GM10248 (cell line): ENCODE measurements at regions of chr5 and their contacts with region 1.

Region 1: DNA sequence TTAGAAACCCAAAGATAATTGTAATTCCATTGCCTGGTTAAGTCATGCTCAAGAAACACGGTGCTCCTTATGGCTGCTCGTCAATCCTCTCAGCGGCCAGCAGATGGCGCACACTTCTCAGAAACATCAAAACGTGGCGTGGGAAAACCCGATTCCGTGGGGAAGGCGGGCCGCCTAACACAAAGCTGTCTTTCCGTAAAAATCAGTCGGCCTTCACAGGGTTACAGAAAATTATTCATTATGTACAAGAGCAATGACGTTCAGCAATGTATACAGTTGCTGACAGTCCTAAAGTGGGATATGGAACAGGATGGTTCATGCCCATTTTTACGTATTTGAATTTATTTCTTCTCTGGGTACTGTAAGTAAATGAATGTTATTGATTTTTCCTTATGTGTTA is 83.5 kb downstream of the PDE4D start:
- DNase-seq: peak; percentile 64
- CTCF ChIP-seq: peak; percentile 89

Region 2: GRCh38 chr5:59790399-59791125 is 19.5 kb before region 1 on chr5:
- CTCF ChIA-PET with region 1: interaction called, 11 read pairs
- POLR2A ChIA-PET with region 1: no interaction called
- DNase-seq: peak; percentile 23
- CTCF ChIP-seq: no peak

Region 3: GRCh38 chr5:59828623-59829022 is 18.6 kb after region 1 on chr5:
- CTCF ChIA-PET with region 1: interaction called, 34 read pairs
- POLR2A ChIA-PET with region 1: no interaction called
- DNase-seq: no peak
- CTCF ChIP-seq: no peak

Region 4: DNA sequence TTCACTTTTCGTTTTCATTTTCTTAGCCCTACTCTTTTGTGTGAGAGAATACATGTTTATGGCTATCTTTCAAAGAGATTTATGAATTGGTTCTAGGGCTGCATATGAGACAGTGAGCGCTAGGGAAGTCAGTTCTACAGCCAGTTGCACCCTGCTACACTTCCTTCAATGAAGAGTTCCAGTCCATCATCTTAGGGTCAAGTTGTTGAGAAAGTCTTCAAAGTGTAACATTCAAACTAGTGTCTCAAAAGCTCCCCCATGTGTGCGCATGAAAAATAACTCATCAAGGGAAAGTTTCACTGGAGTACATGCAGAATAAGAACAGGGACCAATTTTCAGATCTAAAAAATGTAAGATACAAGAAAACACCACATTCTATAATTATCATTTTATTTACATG is 572.7 kb after region 1 on chr5:
- CTCF ChIA-PET with region 1: interaction called, 12 read pairs
- POLR2A ChIA-PET with region 1: no interaction called
- DNase-seq: peak; percentile 29
- CTCF ChIP-seq: peak; percentile 27

Region 5: DNA sequence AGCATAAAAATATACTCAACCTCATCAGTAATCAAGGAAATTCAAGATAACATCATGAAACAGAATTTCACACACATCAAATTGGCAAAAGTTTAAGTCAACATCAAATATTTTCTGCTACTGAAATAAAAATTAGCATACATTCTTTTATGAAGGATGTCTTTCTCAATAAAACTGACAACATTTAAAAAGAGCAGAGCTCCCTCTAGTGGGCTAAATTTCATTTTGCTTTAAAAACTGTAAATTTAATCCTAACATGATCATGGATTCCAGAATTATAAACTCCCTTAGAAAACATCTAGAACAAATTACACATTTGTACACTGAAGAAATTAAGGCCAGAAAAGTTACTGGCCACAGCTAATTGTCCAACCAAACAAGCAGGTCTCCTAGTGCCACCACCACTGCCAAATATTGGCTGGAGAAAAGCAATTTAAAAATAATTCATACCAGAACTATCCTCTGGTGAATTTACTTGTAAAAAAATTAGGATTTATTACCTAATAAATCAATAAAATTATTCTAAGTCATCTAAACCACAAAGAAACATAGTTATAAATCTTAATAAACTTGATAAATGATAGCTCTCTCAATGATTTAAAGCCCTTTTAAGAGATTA is 858.8 kb after region 1 on chr5:
- CTCF ChIA-PET with region 1: interaction called, 57 read pairs
- POLR2A ChIA-PET with region 1: no interaction called
- DNase-seq: peak; percentile 23
- CTCF ChIP-seq: peak; percentile 47

Region 6: DNA sequence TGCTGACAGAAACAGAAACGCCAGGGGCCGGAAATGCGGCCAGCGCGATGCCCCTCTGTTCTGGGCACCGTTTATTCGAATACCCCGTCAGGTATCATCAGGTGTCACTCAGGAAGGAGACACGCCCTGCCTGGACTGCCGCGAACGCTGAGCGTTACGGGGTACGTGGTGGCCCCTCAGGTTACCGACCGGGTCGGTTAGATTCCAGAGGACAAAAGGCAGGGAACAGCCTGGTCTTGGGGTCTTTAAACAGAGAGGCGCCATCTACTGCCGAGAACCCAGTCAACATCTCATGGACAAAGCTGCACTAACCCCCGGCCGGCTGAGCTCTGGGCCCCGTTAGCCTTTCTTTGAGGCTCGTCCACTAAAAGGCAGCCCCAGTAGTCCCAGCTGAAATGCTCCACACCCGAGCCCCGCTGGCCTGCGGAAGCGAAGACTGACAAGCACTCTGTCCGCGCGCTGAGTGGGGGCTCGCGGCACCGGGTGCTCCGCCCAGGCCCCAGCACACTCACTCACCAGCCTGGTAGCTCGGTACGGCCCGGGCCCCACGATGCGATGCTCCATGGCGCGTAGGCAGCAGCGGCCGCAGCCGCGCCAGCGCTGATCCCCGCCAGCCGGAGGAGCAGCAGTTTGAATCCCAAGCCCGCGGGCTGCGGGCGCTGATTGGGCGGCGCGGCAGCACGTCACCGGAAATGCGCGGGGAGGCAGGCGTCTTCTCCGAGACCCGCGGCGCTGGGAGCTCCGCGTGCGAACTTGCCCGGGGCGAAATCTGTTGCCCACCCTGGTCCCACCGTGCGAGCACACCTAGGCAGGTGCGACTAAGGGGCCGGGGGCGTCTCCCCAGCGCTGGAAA is 889.7 kb after region 1 on chr5 and contains the start of gene DEPDC1B:
- CTCF ChIA-PET with region 1: interaction called, 17 read pairs
- POLR2A ChIA-PET with region 1: no interaction called
- DNase-seq: peak; percentile 92
- CTCF ChIP-seq: peak; percentile 36